GM10248 (cell line): ENCODE measurements at regions of chr10 and their contacts with region 1.

Region 1: DNA sequence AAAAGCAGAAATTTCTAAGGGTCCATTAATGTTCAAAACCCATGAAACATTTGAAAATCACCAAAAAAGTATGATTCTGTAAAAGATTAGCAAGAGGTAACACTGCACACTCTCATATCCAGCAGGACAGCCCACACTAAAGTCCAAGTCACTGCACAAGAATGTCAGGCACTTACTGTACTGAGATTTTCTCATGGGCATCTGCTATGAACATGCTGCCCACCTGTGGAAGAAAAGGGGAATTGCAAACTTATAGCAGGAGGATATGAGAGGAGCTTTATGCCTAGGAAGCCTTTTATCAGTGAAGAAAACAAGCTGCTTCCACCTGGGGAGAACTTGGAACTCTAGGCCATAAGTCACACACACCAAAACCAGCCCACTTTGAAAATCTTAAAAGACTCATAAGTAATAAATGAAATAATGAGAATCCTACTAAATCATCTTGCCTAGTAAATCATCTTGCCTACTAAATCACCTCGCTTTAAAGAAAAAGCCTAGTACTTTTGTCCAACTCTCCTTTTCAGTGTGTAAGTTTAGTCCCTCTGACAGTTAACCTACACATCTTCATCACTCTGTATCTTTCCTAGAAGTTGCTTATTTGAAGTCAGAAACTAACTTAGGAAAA is 46.1 kb downstream of the ARMH3 start:
- DNase-seq: peak; percentile 72
- CTCF ChIP-seq: peak; percentile 94

Region 2: GRCh38 chr10:101095542-101096213 is 914.2 kb before region 1 on chr10:
- CTCF ChIA-PET with region 1: no interaction called
- POLR2A ChIA-PET with region 1: no interaction called
- DNase-seq: peak; percentile 86
- CTCF ChIP-seq: peak; percentile 84

Region 3: DNA sequence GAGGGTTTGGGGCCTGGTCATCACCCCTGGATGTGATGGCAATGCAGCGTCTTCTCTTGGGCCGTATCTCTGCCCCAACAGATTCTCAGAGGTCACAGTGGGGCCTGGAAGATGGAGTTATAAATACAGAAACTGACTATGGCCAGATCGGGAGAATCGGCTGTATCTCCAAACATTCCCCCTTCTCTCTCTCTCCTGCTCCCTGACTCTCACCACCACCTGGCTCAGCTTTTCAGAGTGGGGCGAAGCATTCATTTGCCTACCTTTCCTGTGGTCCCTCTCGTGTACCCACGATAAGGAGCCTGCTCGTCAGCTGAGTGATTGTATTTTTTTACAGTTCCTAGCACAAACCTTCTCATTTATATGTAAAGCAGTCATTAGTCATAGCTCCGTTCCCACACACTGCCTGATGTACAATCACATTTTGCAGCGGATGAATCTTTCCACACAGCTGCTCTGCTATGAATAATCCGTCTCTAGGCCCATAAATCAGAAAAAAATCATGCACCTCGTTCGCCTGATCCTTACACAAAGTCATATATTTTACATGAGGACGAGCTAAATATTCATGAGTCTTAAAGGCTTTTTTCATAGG is 679.2 kb before region 1 on chr10:
- CTCF ChIA-PET with region 1: no interaction called
- POLR2A ChIA-PET with region 1: no interaction called
- DNase-seq: no peak
- CTCF ChIP-seq: no peak

Region 4: GRCh38 chr10:101818119-101818871 is 191.6 kb before region 1 on chr10 and contains the start of gene OGA:
- CTCF ChIA-PET with region 1: interaction called, 17 read pairs
- POLR2A ChIA-PET with region 1: no interaction called
- DNase-seq: peak; percentile 94
- CTCF ChIP-seq: no peak

Region 5: DNA sequence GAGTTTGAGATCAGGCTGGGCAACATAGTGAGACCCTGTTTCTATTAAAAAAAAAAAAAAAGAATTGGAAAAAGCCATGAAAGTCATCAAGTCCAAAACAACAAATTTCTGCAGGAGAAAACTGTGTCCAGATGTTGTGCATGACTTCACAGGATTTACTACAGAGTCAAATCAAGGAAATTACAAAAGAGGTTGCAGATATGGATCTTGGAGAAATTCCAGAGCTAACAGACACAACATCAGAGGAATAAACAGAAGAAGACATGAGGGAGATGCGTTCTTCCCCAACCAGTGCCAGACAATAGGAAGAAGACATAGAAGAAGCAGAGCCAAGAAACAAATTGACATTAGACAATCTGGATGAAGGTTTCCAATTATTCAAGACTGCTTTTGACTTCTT is 142.0 kb before region 1 on chr10:
- CTCF ChIA-PET with region 1: interaction called, 12 read pairs
- POLR2A ChIA-PET with region 1: no interaction called
- DNase-seq: no peak
- CTCF ChIP-seq: no peak

Region 6: DNA sequence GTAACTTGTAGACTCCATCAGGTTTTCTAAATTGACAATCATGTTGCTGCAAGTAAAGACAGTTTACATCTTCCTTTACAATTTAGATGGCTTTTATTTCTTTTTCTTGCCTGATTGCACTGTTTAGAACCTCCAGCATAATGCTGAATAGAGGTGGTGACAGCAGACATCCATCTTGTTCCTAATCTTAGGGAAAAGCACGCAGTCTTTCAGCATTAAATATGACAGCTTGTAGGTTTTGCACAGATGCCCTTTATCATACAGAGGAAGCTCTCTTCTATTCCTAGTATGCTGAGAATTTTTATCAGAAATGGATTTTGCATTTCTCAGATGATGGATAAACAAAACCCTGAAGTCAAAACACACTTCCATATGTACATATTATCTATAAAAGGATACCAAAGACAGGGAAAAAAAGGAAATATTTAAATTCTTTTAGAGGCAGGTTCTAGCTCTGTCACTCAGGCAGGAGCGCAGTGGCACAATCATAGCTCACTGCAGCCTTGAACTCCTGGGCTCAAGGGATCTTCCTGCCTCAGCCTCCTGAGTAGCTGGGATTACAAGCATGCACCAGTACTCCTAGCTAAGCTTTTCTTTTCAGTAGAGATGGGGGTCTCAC is 97.2 kb before region 1 on chr10:
- CTCF ChIA-PET with region 1: interaction called, 11 read pairs
- POLR2A ChIA-PET with region 1: interaction called, 5 read pairs
- DNase-seq: no peak
- CTCF ChIP-seq: no peak

Region 7: DNA sequence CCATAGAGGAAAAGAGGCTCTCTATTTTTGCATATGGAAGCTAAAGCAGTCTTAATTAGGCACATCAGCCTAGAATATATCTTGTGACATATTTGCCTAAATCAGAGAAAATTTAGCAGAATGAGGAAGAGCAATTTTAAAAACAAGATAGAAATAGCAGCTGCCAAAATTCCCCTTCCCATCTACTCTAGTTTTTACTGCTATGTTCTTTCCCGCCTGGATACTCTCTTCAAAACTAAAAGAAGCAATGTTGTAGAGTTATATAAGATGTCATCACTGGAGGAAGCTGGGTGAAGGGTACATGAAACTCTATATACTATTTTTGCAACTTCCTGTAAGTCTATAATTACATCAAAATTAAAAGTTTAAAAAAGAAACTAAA is 41.0 kb before region 1 on chr10:
- CTCF ChIA-PET with region 1: interaction called, 31 read pairs
- POLR2A ChIA-PET with region 1: no interaction called
- DNase-seq: no peak
- CTCF ChIP-seq: no peak

Region 8: DNA sequence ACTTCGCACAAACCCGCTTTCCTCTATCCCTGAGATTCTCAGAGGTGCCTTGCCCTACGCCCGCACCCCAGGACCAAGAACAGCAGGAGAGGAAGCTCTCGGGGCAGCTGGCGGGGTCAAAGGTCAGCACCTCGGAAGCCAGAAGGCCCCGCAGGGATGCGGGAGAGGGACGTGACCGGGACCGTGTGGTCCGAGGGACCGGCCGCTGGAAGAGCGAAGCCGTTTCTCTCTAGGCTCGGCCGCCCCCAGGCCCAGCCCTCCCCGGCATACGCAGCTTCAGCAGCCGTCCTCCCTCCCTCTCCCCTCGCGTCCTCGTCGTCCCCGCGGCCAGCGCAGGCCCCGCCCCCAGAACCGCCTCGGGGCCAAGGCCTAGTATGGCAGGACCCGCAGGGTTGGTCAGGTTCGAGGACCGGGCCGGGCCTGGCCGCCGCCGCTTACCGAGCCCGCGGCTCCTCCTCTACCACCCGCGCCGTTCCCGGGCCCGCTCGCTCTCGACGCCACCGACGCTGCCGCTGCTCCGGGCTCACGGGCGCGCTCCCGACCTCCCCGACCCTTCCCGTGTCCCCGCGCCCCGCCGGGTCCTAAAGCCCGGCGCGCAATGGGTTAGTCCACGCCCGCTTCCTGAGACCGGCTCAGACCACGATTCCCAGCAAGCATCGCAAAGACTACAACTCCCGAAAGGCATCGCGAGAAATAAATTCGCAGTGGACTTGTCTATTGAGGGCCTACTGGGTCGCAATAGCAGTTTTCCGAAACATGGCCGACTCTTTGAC is 45.9 kb after region 1 on chr10 and contains the start of gene ARMH3:
- CTCF ChIA-PET with region 1: interaction called, 10 read pairs
- POLR2A ChIA-PET with region 1: no interaction called
- DNase-seq: peak; percentile 98
- CTCF ChIP-seq: no peak